PC-9 (cell line): ENCODE measurements at regions of chr3 and their contacts with region 1.

Region 1: GRCh38 chr3:107443461-107443860 is 66.2 kb downstream of the CCDC54 start:
- DNase-seq: no peak
- H3K4me3 ChIP-seq: no peak overlapping the region
- H3K27ac ChIP-seq: no peak overlapping the region
- H3K4me1 ChIP-seq: no peaks in the 10 kb centered on the region
- H3K27me3 ChIP-seq: no peaks in the 10 kb centered on the region
- CTCF ChIP-seq: no peak

Region 2: DNA sequence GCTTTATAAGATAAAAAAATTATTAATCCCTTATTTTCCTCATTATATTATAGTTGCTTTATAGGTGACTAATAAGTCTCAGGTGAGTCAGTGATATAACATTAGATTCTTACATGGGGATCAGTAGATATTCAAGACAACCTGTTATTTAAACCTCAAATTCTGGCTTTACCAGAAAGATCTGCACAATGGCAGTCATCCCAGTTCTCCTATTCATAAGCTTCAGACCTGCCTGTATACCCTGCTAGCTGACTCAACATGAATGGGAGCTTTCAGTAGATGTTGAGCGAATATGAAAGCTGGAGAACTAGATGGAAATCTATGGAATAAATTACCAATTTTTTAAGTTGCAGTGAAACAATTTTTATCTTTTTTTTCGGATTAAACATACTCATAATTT is 86.8 kb before region 1 on chr3:
- CTCF ChIA-PET with region 1: no interaction called
- POLR2A ChIA-PET with region 1: interaction called, 13 read pairs
- intact Hi-C with region 1: no loop called
- DNase-seq: no peak
- H3K4me3 ChIP-seq: no peak overlapping the region
- H3K27ac ChIP-seq: no peak overlapping the region
- H3K4me1 ChIP-seq: no peaks in the 10 kb centered on the region
- H3K27me3 ChIP-seq: no peaks in the 10 kb centered on the region
- CTCF ChIP-seq: no peak